Breast epithelium (tissue), 4 donors: ENCODE measurements at regions of chr12 and their contacts with region 1.

Region 1: GRCh38 chr12:130413909-130414308 is 76.2 kb downstream of the PIWIL1 start:
- DNase-seq: no peak
- H3K4me3 ChIP-seq: no peak overlapping the region
- H3K27ac ChIP-seq: no peak overlapping the region
- H3K4me1 ChIP-seq: no peaks in the 10 kb centered on the region
- H3K27me3 ChIP-seq: no peaks in the 10 kb centered on the region
- CTCF ChIP-seq: no peak
- POLR2A ChIP-seq: no peak

Region 2: GRCh38 chr12:130347588-130347987 is 66.3 kb before region 1 on chr12:
- intact Hi-C with region 1: loop called (anchors 5 kb)
- DNase-seq: no peak
- H3K4me3 ChIP-seq: no peak overlapping the region
- H3K27ac ChIP-seq: no peak overlapping the region
- H3K4me1 ChIP-seq: no peaks in the 10 kb centered on the region
- H3K27me3 ChIP-seq: peaks cover 0 to 14% of the 10 kb centered on the region in 2 donors
- CTCF ChIP-seq: no peak
- POLR2A ChIP-seq: no peak